SK-N-SH (cell line): ENCODE measurements at regions of chr17 and their contacts with region 1.

Region 1: GRCh38 chr17:76623271-76624146 is 20.0 kb downstream of the ST6GALNAC1 start:
- DNase-seq: peak; percentile 94
- H3K4me3 ChIP-seq: peak overlapping the region in 1 of 2 experiments; percentile 15; a peak in 2 of 4 replicates
- H3K27ac ChIP-seq: peak overlapping the region; percentile 47 to 53; a peak in 3 of 4 replicates
- H3K4me1 ChIP-seq: 0 out of 4 replicates have a peak, but pooled peaks cover 0 to 8% of the 10 kb centered on the region in 2 experiments
- H3K27me3 ChIP-seq: peaks cover 19% of the 10 kb centered on the region; the same call in 1 of the 2 replicates
- CTCF ChIP-seq: peak; percentile 99
- EP300 ChIP-seq: peak in 1 of 2 experiments; percentile 3; a peak in 1 of 4 replicates
- RAD21 ChIP-seq: peak; percentile 91

Region 2: DNA sequence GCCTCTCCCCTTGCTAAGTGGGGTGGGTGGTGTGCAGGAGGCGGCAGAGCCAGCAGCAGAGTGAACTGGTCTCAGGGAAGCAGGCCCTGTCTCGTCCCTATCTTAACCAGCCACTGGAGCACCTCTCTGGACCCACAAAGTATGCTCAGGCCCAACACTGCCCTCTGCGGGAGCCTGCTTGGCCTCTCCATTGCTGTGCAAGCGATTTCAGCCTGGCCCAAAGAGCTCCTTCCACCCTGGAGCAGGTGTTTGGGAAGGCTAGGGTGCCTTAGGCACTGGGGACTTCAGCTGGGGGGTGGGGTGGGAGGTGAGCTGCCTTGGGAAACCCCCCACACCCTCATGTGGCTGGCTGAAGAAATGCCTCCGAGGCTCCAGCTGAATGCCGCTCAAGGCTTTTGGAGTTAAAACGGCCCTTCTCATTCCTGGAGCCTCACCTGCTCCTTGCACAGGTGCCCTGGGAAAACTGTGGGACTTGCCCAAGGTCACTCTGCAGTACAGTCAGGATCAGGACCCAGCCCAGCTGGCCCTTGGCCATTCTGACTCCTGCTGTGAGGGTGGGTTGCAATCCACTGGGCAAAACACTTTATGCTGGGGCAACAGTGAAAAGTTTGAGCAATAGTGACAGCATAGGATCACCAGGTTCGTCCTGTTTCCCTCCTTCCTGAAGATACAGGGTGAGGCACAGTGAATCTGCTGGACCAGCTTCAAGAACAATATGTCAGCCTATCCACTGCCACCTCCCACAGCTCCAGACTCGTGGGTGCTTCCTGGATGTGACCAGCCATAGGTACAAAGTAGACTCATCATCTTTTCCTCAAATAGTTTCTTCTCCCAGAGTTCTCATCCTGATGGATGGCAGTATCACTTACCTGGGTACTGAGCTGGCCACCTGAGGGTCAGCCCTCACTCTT is 164.7 kb before region 1 on chr17:
- CTCF ChIA-PET with region 1: interaction called, 18 read pairs
- POLR2A ChIA-PET with region 1: no interaction called
- DNase-seq: peak; percentile 79
- H3K4me3 ChIP-seq: no peak overlapping the region
- H3K27ac ChIP-seq: no peak overlapping the region
- H3K4me1 ChIP-seq: no peaks in the 10 kb centered on the region; a peak in 1 of 4 replicates
- H3K27me3 ChIP-seq: no peaks in the 10 kb centered on the region
- CTCF ChIP-seq: peak; percentile 51
- EP300 ChIP-seq: no peak
- RAD21 ChIP-seq: peak; percentile 81

Region 3: GRCh38 chr17:76547184-76547641 is 76.3 kb before region 1 on chr17:
- CTCF ChIA-PET with region 1: interaction called, 206 read pairs
- POLR2A ChIA-PET with region 1: interaction called, 3 read pairs
- DNase-seq: peak; percentile 83
- H3K4me3 ChIP-seq: peak overlapping the region in 1 of 2 experiments; percentile 11; a peak in 2 of 4 replicates
- H3K27ac ChIP-seq: peak overlapping the region; percentile 57 to 99
- H3K4me1 ChIP-seq: peaks cover 25 to 56% of the 10 kb centered on the region in 2 experiments
- H3K27me3 ChIP-seq: peaks cover 9% of the 10 kb centered on the region; the same call in 1 of the 2 replicates
- CTCF ChIP-seq: peak; percentile 92
- EP300 ChIP-seq: peak in 1 of 2 experiments; percentile 7; a peak in 1 of 4 replicates
- RAD21 ChIP-seq: peak; percentile 99

Region 4: DNA sequence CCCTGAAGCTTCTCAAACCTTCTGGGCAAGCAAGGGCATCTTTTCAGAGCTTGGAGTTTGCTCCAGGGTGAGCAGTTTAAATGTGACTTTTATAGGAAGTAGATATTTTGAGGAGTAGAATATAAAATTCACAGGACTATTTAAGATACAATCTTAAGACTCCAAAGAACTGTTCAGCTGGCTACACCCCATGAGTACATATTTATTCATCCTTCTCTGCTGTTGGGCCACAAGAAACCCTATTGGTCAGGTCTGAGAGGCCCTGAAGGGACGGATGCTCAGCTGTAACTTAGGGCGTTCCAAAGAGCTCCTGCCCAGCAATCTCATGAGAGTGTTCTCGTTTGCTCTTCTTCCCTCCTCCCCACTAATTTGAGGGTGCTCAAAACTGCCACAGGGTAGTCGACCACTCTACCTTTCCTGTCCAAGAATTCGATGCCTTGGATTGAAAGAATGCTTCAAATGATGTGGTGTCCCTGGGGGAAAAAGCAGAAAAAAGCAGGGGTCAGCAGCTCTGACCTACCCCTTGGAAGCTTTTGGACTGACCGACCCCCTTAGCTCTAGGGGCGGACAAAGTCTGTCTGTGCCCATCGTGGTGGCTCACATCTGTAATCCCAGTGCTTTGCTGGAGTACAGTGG is 45.0 kb before region 1 on chr17:
- CTCF ChIA-PET with region 1: interaction called, 45 read pairs
- POLR2A ChIA-PET with region 1: no interaction called
- DNase-seq: no peak
- H3K4me3 ChIP-seq: no peak overlapping the region
- H3K27ac ChIP-seq: no peak overlapping the region
- H3K4me1 ChIP-seq: no peaks in the 10 kb centered on the region
- H3K27me3 ChIP-seq: no peaks in the 10 kb centered on the region
- CTCF ChIP-seq: no peak
- EP300 ChIP-seq: no peak
- RAD21 ChIP-seq: no peak

Region 5: DNA sequence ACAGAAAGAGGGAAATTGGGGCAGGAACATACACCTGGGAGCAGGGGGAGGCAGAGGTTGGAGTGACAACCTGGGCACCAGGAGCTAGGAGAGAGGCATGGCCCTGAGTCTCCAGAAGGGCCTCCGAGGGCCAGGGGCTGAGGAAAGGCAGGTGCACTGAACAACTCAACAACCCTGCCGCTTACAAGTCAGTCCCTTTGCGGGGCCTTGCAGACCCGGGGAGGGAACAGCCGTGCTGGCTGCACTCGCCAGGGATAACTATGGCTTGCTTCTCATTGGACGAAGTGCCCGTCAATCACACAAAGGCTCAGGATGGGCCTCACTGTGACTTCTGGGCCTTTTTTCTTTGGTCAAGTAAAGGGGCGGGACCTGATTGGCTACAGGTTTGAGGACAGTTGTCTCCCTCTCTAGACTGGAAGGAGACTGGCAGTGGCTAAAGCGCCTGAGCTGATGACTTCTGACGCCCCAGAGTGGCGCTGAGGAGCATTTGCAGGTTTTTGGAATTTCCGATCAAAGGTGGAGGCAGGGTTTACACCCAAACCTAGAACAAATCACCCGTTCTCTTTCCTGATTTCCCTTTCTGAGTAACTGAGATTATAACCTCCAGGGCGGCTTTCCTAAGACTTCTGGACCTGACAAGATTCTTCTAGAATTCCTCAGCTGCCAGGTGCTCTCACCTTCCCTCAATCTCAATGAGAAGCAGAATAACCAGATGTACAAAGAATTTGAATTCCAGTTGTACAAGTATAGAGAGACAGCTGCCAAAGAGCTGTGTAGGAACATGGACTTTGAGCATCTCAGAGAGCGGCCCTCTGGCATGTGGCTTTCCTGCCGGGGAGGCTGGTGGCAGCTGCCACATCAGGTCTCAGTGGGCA is 10.3 kb before region 1 on chr17:
- CTCF ChIA-PET with region 1: interaction called, 82 read pairs
- POLR2A ChIA-PET with region 1: interaction called, 3 read pairs
- DNase-seq: no peak
- H3K4me3 ChIP-seq: no peak overlapping the region
- H3K27ac ChIP-seq: no peak overlapping the region
- H3K4me1 ChIP-seq: no peaks in the 10 kb centered on the region; a peak in 1 of 4 replicates
- H3K27me3 ChIP-seq: no peaks in the 10 kb centered on the region; the same call in 1 of the 2 replicates
- CTCF ChIP-seq: no peak
- EP300 ChIP-seq: no peak
- RAD21 ChIP-seq: no peak

Region 6: GRCh38 chr17:76671123-76671911 is 47.8 kb after region 1 on chr17:
- CTCF ChIA-PET with region 1: interaction called, 10 read pairs
- POLR2A ChIA-PET with region 1: no interaction called
- DNase-seq: peak; percentile 99
- H3K4me3 ChIP-seq: peak overlapping the region; percentile 69 to 70
- H3K27ac ChIP-seq: peak overlapping the region in 1 of 2 experiments; percentile 94; a peak in 3 of 4 replicates
- H3K4me1 ChIP-seq: peaks cover 0 to 33% of the 10 kb centered on the region in 2 experiments; a peak in 2 of 4 replicates
- H3K27me3 ChIP-seq: no peaks in the 10 kb centered on the region
- CTCF ChIP-seq: no peak
- EP300 ChIP-seq: no peak; a peak in 1 of 4 replicates
- RAD21 ChIP-seq: no peak

Region 7: DNA sequence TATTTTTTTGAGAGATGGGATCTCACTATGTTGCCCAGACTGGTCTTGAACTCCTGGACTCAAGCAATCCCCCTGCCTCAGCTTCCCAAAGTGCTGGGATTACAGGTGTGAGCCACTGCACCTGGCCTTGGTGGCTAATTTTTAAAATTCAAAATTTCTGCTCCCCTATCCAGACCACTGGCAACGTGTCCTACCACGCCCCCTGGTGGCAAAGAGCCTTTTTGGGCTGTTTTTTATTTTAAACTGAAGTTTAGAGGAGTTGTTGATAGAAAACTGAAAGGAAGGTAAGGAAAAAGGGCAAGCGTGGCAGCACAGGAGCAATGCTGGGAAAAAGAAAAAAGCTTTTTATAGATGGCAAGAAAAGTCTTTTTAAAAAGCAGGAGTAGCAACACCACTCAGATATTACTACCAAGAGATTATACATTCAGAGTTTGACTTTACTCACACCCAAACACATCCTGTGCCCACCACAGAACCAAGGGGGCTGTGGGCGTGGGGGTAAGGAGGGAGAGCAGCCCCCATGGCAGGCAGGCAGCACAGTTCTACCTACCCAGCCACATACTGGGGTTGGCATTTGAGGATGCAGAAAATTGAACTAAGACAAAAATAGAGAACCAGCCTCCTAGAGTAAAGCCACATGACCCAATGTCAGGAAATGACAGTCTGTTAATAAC is 91.5 kb after region 1 on chr17:
- CTCF ChIA-PET with region 1: interaction called, 11 read pairs
- POLR2A ChIA-PET with region 1: no interaction called
- DNase-seq: peak; percentile 76
- H3K4me3 ChIP-seq: no peak overlapping the region
- H3K27ac ChIP-seq: peak overlapping the region in 1 of 2 experiments; percentile 97; a peak in 3 of 4 replicates
- H3K4me1 ChIP-seq: peaks cover 10 to 32% of the 10 kb centered on the region in 2 experiments
- H3K27me3 ChIP-seq: no peaks in the 10 kb centered on the region
- CTCF ChIP-seq: peak; percentile 100
- EP300 ChIP-seq: no peak
- RAD21 ChIP-seq: peak; percentile 81

Region 8: GRCh38 chr17:77086433-77087010 is 463.0 kb after region 1 on chr17:
- CTCF ChIA-PET with region 1: no interaction called
- POLR2A ChIA-PET with region 1: no interaction called
- DNase-seq: peak; percentile 78
- H3K4me3 ChIP-seq: peak overlapping the region in 1 of 2 experiments; percentile 6; a peak in 1 of 4 replicates
- H3K27ac ChIP-seq: peak overlapping the region in 1 of 2 experiments; percentile 84; a peak in 2 of 4 replicates
- H3K4me1 ChIP-seq: peaks cover 5 to 25% of the 10 kb centered on the region in 2 experiments; a peak in 1 of 4 replicates
- H3K27me3 ChIP-seq: no peaks in the 10 kb centered on the region
- CTCF ChIP-seq: peak; percentile 99
- EP300 ChIP-seq: no peak
- RAD21 ChIP-seq: peak; percentile 74